ENCODE measurements at regions of chr17 and their contacts with region 1.

Region 1: DNA sequence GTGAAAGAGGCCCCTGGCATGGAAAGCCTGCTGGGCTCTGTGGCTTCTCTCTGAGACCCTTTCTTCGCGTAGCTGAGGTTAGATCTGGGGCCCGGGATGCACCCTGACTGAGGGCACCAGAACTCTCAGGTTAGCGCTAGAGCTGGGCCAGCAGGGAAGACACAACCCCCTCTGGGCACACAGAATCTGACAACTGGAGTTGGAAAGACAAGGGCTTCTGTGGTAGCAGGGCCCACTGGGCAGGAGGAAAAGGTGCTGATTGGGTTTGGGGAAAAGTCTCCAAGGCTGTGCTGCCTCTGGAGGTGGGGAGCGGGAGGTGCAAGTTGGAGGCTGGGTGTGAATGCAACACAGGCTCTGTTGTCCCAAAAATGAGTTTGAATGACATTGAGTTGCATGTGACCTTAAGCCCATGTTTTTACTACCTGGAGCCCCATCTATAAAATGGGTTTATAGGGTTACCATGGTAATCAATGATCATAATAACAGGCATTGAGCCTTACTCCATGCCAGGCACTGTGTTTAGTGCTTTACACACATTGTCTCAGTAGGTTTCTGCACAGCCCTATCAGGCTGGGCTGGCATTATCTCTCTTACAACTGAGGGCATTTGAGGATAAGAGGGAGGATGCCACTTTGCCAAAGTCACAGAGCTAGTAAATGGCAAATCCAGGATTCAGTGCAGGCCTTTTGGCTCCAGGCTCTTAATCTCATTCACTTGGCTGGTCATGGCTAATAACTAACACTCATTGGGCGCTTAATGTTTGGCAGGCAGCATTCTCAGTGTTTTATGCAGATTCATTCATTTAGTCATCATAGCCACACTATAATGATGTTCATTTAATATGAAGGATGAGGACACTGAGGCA is 9.5 kb upstream of the IGFBP4 start:
- DNase-seq: peak in 2 of 3 donors; percentile 40 to 44
- H3K4me3 ChIP-seq: no peak overlapping the region
- H3K27ac ChIP-seq: no peak overlapping the region
- H3K4me1 ChIP-seq: peaks cover 0 to 21% (median 13%) of the 10 kb centered on the region in 4 experiments
- H3K27me3 ChIP-seq: no peaks in the 10 kb centered on the region

Region 2: DNA sequence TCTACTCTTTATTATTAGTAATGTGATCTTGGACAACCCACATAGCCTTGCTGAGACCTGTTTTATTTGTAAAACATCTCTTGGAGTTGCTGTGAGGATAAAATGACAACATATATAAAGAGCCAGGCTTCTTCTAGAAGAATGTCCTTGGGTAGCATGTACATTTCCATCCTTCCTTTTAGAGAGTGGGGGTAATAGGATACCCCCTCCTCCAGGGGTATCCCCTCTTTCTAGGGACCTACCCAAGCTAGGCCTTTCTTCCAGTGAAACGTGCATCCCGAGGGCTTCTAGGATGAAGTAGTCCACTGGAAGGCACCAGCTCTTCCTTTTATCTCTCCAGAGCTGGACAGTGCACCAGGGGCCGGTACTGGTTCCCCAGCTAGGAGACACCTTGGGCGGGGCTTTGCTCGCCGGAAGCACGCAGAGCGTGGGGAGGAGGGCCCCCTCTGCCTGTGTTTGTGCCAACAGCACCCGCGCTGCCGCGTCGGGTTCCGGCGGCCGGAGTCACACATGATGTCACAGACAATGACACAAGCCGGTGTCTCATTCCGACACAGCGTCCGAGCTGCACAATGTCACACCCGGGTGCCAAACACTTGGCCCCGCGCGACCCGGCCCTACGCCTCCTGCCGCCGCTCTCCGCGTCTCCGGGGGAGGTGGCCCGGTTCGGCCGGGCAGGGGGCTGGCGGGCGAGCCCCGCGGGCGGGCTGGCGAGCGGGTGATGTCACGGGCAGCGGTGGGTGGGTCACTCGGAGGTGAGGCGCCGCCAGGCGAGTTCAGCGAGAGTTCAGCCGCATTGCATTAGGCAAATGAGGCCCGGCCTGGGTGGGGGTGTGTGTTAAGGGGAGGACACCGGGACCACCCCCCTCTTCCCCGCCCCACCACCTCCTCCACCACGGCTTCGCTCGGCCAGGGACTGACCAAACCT is 92.6 kb before region 1 on chr17:
- CTCF ChIA-PET with region 1: no interaction called
- POLR2A ChIA-PET with region 1: no interaction called
- DNase-seq: peak; percentile 84 to 89 (median 84)
- H3K4me3 ChIP-seq: peak overlapping the region; percentile 40 to 91 (median 76)
- H3K27ac ChIP-seq: peak overlapping the region; percentile 64 to 82
- H3K4me1 ChIP-seq: peaks cover 26 to 95% (median 88%) of the 10 kb centered on the region in 4 experiments
- H3K27me3 ChIP-seq: no peaks in the 10 kb centered on the region

Region 3: DNA sequence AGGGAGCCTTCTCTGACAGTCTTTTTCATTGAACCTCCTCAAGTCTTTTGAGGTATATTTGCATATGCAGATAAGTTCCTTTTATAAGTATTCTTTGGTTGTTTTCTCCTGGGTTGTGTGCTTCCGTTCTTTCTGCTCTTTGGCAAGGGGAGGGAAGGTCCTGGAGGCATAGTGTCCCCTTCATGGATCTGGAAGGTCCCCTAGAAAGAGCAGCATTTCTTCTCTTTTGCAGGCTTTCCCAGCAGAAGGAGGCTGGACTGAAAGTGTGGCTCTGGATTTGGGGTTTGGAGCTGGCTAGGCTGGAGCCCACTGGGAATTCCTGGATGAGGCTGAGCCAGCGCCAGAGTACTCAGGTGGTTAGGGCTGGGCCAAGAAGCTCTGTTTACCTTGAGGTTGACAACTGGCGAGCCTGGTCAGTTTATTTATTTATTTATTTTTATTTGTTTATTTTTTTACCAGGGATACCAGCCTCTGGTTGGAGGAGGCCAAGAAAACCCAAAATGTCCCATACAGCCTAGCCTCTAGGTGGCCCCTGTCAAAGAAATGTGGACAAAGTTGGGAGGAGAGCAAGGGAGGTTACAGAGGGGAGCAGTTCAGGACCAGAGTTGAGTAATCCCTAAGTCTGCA is 10.7 kb before region 1 on chr17:
- CTCF ChIA-PET with region 1: interaction called, 22 read pairs
- POLR2A ChIA-PET with region 1: no interaction called
- DNase-seq: no peak
- H3K4me3 ChIP-seq: no peak overlapping the region
- H3K27ac ChIP-seq: no peak overlapping the region
- H3K4me1 ChIP-seq: peaks cover 3 to 44% (median 31%) of the 10 kb centered on the region in 4 experiments
- H3K27me3 ChIP-seq: no peaks in the 10 kb centered on the region

Region 4: DNA sequence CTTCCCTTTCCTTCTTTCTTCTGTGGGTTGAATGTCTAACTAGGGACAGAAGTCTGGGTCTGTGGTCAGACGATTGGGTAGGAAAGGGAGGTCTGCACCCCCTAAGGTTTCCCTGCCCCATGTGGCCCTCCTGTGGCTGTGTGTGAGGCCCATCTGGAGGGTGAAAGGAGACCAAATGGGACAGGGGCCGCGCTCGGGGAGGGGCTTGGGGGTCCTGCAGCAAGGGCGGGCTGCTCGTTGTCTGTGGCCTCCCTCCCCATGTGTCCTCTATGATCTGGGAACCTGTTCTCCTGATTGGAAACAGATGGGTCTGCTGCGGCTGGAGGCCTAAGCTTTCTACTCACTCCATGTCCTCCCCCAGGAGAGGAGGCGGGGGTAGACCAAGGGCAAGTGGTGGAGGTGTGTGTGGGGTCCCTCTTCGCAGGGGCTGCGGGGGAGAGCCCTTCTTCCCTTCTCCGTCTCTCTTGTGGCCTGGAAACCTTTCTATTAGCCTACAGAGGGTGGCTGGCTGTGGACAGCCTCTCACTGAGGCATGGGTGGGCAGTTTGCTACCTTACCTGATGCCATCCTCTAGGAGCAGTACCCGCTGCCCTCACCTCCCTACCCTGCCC is 28.1 kb after region 1 on chr17:
- CTCF ChIA-PET with region 1: no interaction called
- POLR2A ChIA-PET with region 1: no interaction called
- DNase-seq: no peak
- H3K4me3 ChIP-seq: no peak overlapping the region
- H3K27ac ChIP-seq: no peak overlapping the region
- H3K4me1 ChIP-seq: no peaks in the 10 kb centered on the region
- H3K27me3 ChIP-seq: no peaks in the 10 kb centered on the region